ENCODE measurements at regions of chr3 and their contacts with region 1.

Region 1: DNA sequence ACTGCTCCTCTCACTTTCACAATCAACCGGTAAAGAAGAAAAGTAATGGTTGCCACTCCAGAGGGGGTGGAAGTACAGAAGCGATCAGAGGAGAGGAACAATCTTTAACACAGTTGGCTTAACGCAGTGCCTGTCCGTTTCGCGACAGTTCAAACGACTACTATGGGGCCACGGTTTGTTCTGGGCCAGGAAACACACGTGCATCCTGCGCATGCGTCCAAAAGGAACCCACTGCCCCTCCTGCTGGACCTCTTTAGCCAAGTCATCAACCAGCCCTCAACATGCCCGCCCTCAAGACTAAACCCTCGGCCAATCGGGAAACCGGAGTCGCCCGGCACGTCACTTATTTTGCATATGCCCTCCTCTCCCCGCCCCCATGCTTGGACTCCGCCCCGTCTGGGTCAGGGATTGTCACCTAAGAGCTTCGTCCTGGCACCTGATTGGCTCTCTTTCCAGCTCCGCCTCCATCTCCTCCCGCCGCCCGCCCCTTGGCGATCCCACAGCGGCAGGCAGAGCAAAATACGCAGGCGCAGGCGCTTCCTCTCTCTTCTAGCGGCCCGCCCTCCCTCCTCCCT is 345 bp upstream of the CDV3 start:
- DNase-seq: peak; percentile 97 to 100 (median 100)
- ATAC-seq: peak; percentile 78 to 81
- H3K4me3 Mint-ChIP-seq: peak overlapping the region; percentile 79 to 93 (median 88)
- H3K27ac Mint-ChIP-seq: peak overlapping the region; percentile 94 to 100 (median 99)
- H3K4me1 Mint-ChIP-seq: peaks cover 24 to 65% (median 54%) of the 10 kb centered on the region in 4 donors
- H3K27me3 Mint-ChIP-seq: no peaks in the 10 kb centered on the region

Region 2: DNA sequence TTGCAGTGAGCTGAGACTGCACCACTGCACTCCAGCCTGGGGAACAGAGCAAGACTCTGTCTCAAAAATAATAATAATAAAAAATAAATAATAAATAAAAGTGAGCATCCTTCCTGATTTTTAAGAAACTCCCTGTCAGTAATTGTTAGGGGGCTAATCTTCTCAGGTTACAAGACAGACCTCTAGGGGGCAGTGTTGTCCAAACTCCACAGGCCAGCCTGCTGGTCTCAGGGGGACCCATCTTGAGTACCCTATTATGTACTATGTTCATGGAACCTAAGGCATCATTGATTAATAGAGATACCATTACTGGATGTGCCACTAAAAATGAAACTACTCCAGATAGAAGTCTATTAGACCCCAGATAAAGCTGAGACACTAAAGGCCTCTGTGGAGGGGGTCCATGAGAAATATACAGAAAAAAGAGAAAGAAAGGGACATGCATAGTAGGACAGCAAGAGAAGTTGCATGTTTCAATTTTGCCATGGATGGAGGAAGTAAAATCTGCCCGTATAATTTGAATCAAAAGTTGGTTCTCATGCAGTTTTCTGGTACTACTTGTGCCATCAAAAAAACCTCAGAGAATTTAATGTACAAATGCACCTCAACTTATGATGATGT is 85.1 kb before region 1 on chr3:
- POLR2A ChIA-PET with region 1: interaction called, 224 read pairs
- DNase-seq: peak; percentile 40 to 87 (median 62)
- ATAC-seq: peak in 1 of 2 donors; percentile 12
- H3K4me3 Mint-ChIP-seq: peak overlapping the region; percentile 8 to 68 (median 44)
- H3K27ac Mint-ChIP-seq: peak overlapping the region; percentile 63 to 97 (median 94)
- H3K4me1 Mint-ChIP-seq: peaks cover 40 to 61% (median 51%) of the 10 kb centered on the region in 4 donors
- H3K27me3 Mint-ChIP-seq: no peaks in the 10 kb centered on the region

Region 3: GRCh38 chr3:133506215-133506901 is 66.8 kb before region 1 on chr3:
- POLR2A ChIA-PET with region 1: interaction called, 16 read pairs
- DNase-seq: peak in 5 of 10 donors; percentile 22 to 54 (median 44)
- ATAC-seq: peak; percentile 96
- H3K4me3 Mint-ChIP-seq: peak overlapping the region; percentile 73 to 90 (median 85)
- H3K27ac Mint-ChIP-seq: peak overlapping the region; percentile 84 to 98 (median 94)
- H3K4me1 Mint-ChIP-seq: peaks cover 8 to 25% (median 15%) of the 10 kb centered on the region in 4 donors
- H3K27me3 Mint-ChIP-seq: no peaks in the 10 kb centered on the region

Region 4: GRCh38 chr3:133583396-133583795 is 10.3 kb after region 1 on chr3:
- POLR2A ChIA-PET with region 1: no interaction called
- DNase-seq: no peak
- ATAC-seq: no peak
- H3K4me3 Mint-ChIP-seq: peak overlapping the region in 1 of 10 donors; percentile 57
- H3K27ac Mint-ChIP-seq: peak overlapping the region in 7 of 10 donors; percentile 8 to 90 (median 52)
- H3K4me1 Mint-ChIP-seq: peaks cover 16 to 66% (median 51%) of the 10 kb centered on the region in 4 donors
- H3K27me3 Mint-ChIP-seq: no peaks in the 10 kb centered on the region

Region 5: GRCh38 chr3:133661454-133662277 is 88.5 kb after region 1 on chr3 and contains the start of gene TOPBP1:
- POLR2A ChIA-PET with region 1: interaction called, 14 read pairs
- DNase-seq: peak; percentile 68 to 90 (median 80)
- ATAC-seq: peak; percentile 88 to 92
- H3K4me3 Mint-ChIP-seq: peak within 1 kb of the TSS; percentile 96 to 99 (median 98)
- H3K27ac Mint-ChIP-seq: peak within 1 kb of the TSS; percentile 96 to 100 (median 99)
- H3K4me1 Mint-ChIP-seq: peaks cover 25 to 44% (median 40%) of the 10 kb centered on the region in 4 donors
- H3K27me3 Mint-ChIP-seq: no peaks in the 10 kb centered on the region
- polyA plus RNA-seq, gene TOPBP1: 5.3 to 11.0 (median 6.3) TPM

Region 6: GRCh38 chr3:134161898-134162615 is 588.9 kb after region 1 on chr3:
- POLR2A ChIA-PET with region 1: no interaction called
- DNase-seq: no peak
- ATAC-seq: no peak
- H3K4me3 Mint-ChIP-seq: no peak overlapping the region
- H3K27ac Mint-ChIP-seq: peak overlapping the region in 1 of 10 donors; percentile 24
- H3K4me1 Mint-ChIP-seq: peaks cover 0 to 3% (median 0%) of the 10 kb centered on the region in 4 donors
- H3K27me3 Mint-ChIP-seq: no peaks in the 10 kb centered on the region

Region 7: DNA sequence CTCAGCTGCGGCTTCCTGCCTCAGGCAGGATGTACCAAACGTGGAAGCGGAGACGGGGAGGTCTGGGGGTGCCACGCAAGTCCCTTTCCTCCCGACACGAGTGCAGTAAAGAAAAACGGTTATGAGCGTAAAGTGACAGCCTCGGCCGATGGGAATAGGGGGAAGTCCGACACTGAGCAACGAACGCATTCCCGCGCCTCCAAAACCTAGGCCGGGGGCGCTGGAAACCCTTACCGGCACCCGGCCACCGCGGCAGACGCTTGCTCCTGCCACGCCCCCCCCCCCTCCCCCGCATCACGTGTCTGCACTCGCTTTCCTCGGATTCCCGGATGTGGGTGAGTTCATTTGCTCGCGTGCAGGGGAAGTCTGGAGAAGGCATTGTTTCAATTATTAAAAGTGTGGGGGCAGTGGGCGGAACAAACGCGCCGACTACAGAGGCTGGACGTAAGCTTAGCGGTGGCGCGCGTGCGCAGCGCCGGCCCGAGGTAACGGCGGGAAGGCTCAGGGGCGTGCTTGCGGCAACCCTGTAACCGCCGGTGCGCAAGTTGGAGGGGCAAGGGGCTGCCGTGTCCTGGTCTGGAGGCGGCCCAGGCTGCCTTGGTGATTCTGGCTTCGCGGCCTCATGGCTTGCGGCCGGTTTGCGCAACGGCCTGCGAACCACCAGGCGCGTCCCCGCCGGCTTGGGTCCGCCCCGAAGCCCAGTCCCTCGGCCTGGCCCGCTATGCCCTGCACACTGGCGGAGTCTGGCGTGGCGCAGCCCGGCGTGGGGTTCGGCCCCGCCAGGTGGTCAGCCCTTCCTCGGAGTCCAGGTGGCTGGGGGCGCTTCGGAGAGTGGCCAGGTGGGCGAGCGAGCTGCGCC is 912.8 kb after region 1 on chr3 and contains the starts of genes ANAPC13 and CEP63:
- POLR2A ChIA-PET with region 1: interaction called, 25 read pairs
- DNase-seq: peak; percentile 70 to 99 (median 93)
- ATAC-seq: peak; percentile 80 to 85
- H3K4me3 Mint-ChIP-seq: peak within 1 kb of the TSS; percentile 96 to 100 (median 100)
- H3K27ac Mint-ChIP-seq: peak within 1 kb of the TSS; percentile 99 to 100 (median 99)
- H3K4me1 Mint-ChIP-seq: peaks cover 23 to 75% (median 67%) of the 10 kb centered on the region in 4 donors
- H3K27me3 Mint-ChIP-seq: no peaks in the 10 kb centered on the region
- polyA plus RNA-seq, gene ANAPC13: 88.9 to 96.1 (median 90.5) TPM
- polyA plus RNA-seq, gene CEP63: 16.2 to 32.2 (median 26.0) TPM